B cell (primary cell): ENCODE measurements at regions of chr6 and their contacts with region 1.

Region 1: GRCh38 chr6:167093922-167094432 is 28.9 kb upstream of the CCR6 start:
- DNase-seq: peak; percentile 94
- ATAC-seq: peak; percentile 48
- H3K4me3 ChIP-seq: peak overlapping the region; percentile 13 to 80 (median 64)
- H3K4me3 Mint-ChIP-seq: peak overlapping the region; percentile 94
- H3K27ac ChIP-seq: peak overlapping the region; percentile 98 to 99
- H3K27ac Mint-ChIP-seq: peak overlapping the region; percentile 98
- H3K4me1 ChIP-seq: peaks cover 99% of the 10 kb centered on the region in 2 donors
- H3K4me1 Mint-ChIP-seq: peaks cover 93% of the 10 kb centered on the region
- H3K27me3 ChIP-seq: no peaks in the 10 kb centered on the region
- H3K27me3 Mint-ChIP-seq: no peaks in the 10 kb centered on the region
- CTCF ChIP-seq: no peak

Region 2: DNA sequence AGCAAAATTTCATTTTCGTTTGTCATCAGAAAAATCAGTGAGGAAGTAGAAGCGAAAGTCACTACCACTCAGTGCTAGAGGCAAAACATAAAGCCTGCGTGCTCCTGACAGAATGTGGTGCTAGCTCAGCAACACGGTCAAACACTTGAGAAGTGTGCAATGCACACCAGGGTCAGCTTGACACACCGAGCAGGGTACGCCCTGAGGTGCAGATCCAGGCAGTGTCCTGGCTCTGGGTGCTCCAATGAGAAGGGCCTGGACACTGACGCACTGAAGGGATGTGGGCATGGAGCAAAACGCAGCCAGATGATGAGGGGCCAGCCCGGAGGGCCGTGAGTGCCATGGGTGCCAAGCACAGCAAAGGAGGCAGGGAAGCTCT is 143.5 kb before region 1 on chr6:
- CTCF ChIA-PET with region 1: interaction called, 7 read pairs
- POLR2A ChIA-PET with region 1: no interaction called
- intact Hi-C with region 1: loop called (anchors 2 kb)
- DNase-seq: peak; percentile 76
- ATAC-seq: peak; percentile 22
- H3K4me3 ChIP-seq: peak overlapping the region; percentile 1 to 60 (median 24)
- H3K4me3 Mint-ChIP-seq: peak overlapping the region; percentile 94
- H3K27ac ChIP-seq: peak overlapping the region; percentile 82 to 94
- H3K27ac Mint-ChIP-seq: peak overlapping the region; percentile 98
- H3K4me1 ChIP-seq: peaks cover 62 to 69% of the 10 kb centered on the region in 2 donors
- H3K4me1 Mint-ChIP-seq: peaks cover 60% of the 10 kb centered on the region
- H3K27me3 ChIP-seq: no peaks in the 10 kb centered on the region
- H3K27me3 Mint-ChIP-seq: no peaks in the 10 kb centered on the region
- CTCF ChIP-seq: no peak

Region 3: GRCh38 chr6:166999145-166999883 is 94.7 kb before region 1 on chr6 and contains the start of gene CEP43:
- CTCF ChIA-PET with region 1: interaction called, 17 read pairs
- POLR2A ChIA-PET with region 1: interaction called, 3 read pairs
- intact Hi-C with region 1: loop called (anchors 5 kb)
- DNase-seq: peak; percentile 98
- ATAC-seq: peak; percentile 95
- H3K4me3 ChIP-seq: peak within 1 kb of the TSS; percentile 70 to 95 (median 91)
- H3K4me3 Mint-ChIP-seq: peak within 1 kb of the TSS; percentile 91
- H3K27ac ChIP-seq: peak within 1 kb of the TSS; percentile 31 to 83
- H3K27ac Mint-ChIP-seq: peak within 1 kb of the TSS; percentile 86
- H3K4me1 ChIP-seq: peaks cover 21 to 23% of the 10 kb centered on the region in 2 donors
- H3K4me1 Mint-ChIP-seq: peaks cover 29% of the 10 kb centered on the region
- H3K27me3 ChIP-seq: no peaks in the 10 kb centered on the region
- H3K27me3 Mint-ChIP-seq: no peaks in the 10 kb centered on the region
- CTCF ChIP-seq: no peak
- total RNA-seq, gene CEP43: 33.7 and 39.7 TPM in 2 replicates

Region 4: DNA sequence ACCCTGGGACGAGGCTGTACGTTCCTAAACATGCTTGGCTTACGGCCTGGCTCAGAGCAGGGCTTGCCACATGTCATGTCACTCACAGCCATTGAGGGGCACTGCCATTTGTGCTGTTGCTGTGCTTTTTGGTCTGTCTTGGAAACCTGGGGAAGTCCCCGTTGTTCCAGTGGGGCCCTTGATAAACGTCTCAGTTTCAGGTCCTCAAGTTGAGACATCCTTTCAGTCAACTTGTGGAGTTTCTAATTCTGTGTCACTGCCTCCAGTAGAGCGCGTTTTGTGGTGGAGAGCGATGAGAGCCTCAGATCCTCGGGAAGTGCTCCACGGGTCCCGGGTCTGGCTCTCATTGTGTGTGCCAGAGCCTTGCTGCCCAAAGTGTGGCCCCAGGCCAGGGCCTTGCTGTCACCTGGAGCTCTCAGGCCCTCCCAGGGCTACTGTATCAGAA is 14.1 kb before region 1 on chr6:
- CTCF ChIA-PET with region 1: interaction called, 29 read pairs
- POLR2A ChIA-PET with region 1: interaction called, 7 read pairs
- intact Hi-C with region 1: loop called (anchors 1 kb)
- DNase-seq: peak; percentile 93
- ATAC-seq: peak; percentile 99
- H3K4me3 ChIP-seq: peak overlapping the region in 1 of 5 experiments; percentile 48
- H3K4me3 Mint-ChIP-seq: peak overlapping the region; percentile 51
- H3K27ac ChIP-seq: peak overlapping the region; percentile 74 to 87
- H3K27ac Mint-ChIP-seq: peak overlapping the region; percentile 93
- H3K4me1 ChIP-seq: peaks cover 39 to 46% of the 10 kb centered on the region in 2 donors
- H3K4me1 Mint-ChIP-seq: peaks cover 36% of the 10 kb centered on the region
- H3K27me3 ChIP-seq: no peaks in the 10 kb centered on the region
- H3K27me3 Mint-ChIP-seq: no peaks in the 10 kb centered on the region
- CTCF ChIP-seq: peak; percentile 79

Region 5: DNA sequence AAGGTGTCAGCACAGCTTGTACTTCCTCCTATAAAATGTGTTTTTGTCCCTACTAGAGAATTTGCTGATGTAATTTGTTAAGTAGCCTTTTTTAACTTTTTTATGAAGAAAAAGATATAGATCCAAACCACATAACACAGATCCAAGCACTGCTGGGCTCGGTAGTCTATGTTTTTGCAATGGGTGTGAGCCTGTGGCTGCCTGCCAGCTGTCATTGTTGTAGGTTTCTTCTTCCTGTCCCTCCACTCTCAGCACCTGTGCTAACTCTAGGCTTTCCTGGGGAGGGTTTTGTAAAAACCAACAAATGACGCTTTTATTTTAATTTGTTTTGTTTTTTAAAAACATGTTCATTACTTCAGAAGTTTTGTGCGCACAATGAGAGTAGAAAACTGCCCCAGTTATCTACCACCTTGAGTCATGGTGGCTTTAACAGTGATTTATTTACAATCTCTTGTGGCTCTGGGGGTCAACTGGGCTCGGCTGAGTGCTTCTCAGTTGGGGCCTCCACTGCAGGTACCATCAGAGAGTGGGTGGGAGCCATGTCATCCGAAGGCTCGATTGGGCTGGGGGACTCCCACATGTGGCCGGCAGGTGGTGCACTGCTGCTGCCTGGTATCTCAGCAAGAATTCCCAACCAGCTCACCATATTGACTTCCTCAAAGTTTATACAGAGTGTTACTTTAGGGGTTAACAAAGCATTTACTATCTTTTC is 25.8 kb after region 1 on chr6:
- CTCF ChIA-PET with region 1: interaction called, 168 read pairs
- POLR2A ChIA-PET with region 1: interaction called, 432 read pairs
- intact Hi-C with region 1: loop called (anchors 2 kb)
- DNase-seq: peak; percentile 65
- ATAC-seq: no peak
- H3K4me3 ChIP-seq: peak overlapping the region; percentile 2 to 88 (median 15)
- H3K4me3 Mint-ChIP-seq: peak overlapping the region; percentile 96
- H3K27ac ChIP-seq: peak overlapping the region; percentile 97 to 98
- H3K27ac Mint-ChIP-seq: peak overlapping the region; percentile 100
- H3K4me1 ChIP-seq: peaks cover 71 to 84% of the 10 kb centered on the region in 2 donors
- H3K4me1 Mint-ChIP-seq: peaks cover 85% of the 10 kb centered on the region
- H3K27me3 ChIP-seq: no peaks in the 10 kb centered on the region
- H3K27me3 Mint-ChIP-seq: no peaks in the 10 kb centered on the region
- CTCF ChIP-seq: peak; percentile 41

Region 6: GRCh38 chr6:167153521-167153959 is 59.6 kb after region 1 on chr6:
- CTCF ChIA-PET with region 1: interaction called, 4 read pairs
- POLR2A ChIA-PET with region 1: interaction called, 6 read pairs
- intact Hi-C with region 1: loop called (anchors 2 kb)
- DNase-seq: peak; percentile 77
- ATAC-seq: peak; percentile 65
- H3K4me3 ChIP-seq: peak overlapping the region in 4 of 5 experiments; percentile 15 to 52 (median 37)
- H3K4me3 Mint-ChIP-seq: peak overlapping the region; percentile 86
- H3K27ac ChIP-seq: peak overlapping the region; percentile 72 to 83
- H3K27ac Mint-ChIP-seq: peak overlapping the region; percentile 89
- H3K4me1 ChIP-seq: peaks cover 44 to 55% of the 10 kb centered on the region in 2 donors
- H3K4me1 Mint-ChIP-seq: peaks cover 60% of the 10 kb centered on the region
- H3K27me3 ChIP-seq: no peaks in the 10 kb centered on the region
- H3K27me3 Mint-ChIP-seq: no peaks in the 10 kb centered on the region
- CTCF ChIP-seq: no peak